ENCODE measurements at regions of chr5 and their contacts with region 1.

Region 1: DNA sequence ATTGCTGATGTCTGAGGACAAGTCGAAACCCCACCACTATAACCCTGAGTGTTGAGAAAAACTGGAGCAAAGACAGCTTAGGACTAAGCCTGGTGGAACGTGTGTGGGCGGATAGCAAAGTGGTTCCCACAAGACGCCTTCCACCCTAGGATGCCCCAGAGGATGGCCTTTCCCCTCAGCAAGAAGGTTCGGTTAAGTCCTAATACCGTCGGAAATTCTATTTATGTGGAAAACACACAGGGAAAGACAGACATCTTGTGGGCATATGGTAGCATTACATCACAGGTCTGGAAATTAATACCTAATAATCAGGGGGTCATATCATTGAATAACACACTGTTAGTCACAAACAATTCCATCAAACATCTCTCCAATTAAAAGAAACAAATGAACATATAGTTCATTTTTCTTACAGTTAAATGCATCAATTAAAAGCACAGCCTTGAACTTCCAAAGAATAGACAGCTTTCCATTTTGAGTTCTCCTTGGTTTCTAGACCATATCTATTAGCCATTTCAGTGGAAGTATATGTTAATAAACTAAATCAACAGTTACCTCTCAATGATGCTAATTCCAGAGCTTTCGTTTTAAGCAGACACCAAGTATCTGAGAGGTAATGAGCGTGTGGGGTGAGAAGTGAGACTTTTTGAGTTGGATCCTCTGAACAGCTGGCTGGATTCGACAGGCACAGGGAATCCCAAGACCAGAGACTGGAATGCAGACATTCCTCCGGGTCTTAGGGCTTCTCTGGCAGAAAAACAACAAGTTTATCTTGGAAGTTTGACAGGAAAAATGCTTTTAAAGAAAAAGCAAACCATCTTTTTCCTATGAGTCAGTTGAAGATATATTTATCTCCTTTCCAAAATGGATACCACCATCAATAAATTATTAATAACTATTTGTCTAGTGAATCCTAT is 2.9 kb upstream of the ICE1 start:
- DNase-seq: peak in 2 of 6 donors; percentile 17 to 28
- ATAC-seq: peak in 1 of 4 donors; percentile 8
- H3K4me3 ChIP-seq: peak overlapping the region in 1 of 4 donors; percentile 5
- H3K27ac ChIP-seq: no peak overlapping the region
- H3K4me1 ChIP-seq: peaks cover 8 to 25% (median 9%) of the 10 kb centered on the region in 3 donors
- H3K27me3 ChIP-seq: no peaks in the 10 kb centered on the region
- CTCF ChIP-seq: peak; percentile 30 to 59 (median 58)

Region 2: GRCh38 chr5:4879693-4880303 is 539.8 kb before region 1 on chr5:
- intact Hi-C with region 1: loop called in 2 of 3 experiments (anchors 5 to 10 kb)
- DNase-seq: peak in 5 of 6 donors; percentile 62 to 90 (median 84)
- ATAC-seq: peak; percentile 66 to 99 (median 95)
- H3K4me3 ChIP-seq: no peak overlapping the region
- H3K27ac ChIP-seq: no peak overlapping the region
- H3K4me1 ChIP-seq: no peaks in the 10 kb centered on the region
- H3K27me3 ChIP-seq: no peaks in the 10 kb centered on the region
- CTCF ChIP-seq: peak; percentile 82 to 95 (median 88)

Region 3: GRCh38 chr5:5141625-5142532 is 277.7 kb before region 1 on chr5:
- intact Hi-C with region 1: loop called in 2 of 3 experiments (anchors 5 kb)
- DNase-seq: peak in 2 of 6 donors; percentile 27 to 55
- ATAC-seq: peak; percentile 53 to 81 (median 70)
- H3K4me3 ChIP-seq: peak overlapping the region in 1 of 4 donors; percentile 37
- H3K27ac ChIP-seq: no peak overlapping the region
- H3K4me1 ChIP-seq: peaks cover 0 to 5% (median 3%) of the 10 kb centered on the region in 3 donors
- H3K27me3 ChIP-seq: peaks cover 0 to 13% (median 5%) of the 10 kb centered on the region in 4 donors
- CTCF ChIP-seq: peak; percentile 70 to 82 (median 78)

Region 4: DNA sequence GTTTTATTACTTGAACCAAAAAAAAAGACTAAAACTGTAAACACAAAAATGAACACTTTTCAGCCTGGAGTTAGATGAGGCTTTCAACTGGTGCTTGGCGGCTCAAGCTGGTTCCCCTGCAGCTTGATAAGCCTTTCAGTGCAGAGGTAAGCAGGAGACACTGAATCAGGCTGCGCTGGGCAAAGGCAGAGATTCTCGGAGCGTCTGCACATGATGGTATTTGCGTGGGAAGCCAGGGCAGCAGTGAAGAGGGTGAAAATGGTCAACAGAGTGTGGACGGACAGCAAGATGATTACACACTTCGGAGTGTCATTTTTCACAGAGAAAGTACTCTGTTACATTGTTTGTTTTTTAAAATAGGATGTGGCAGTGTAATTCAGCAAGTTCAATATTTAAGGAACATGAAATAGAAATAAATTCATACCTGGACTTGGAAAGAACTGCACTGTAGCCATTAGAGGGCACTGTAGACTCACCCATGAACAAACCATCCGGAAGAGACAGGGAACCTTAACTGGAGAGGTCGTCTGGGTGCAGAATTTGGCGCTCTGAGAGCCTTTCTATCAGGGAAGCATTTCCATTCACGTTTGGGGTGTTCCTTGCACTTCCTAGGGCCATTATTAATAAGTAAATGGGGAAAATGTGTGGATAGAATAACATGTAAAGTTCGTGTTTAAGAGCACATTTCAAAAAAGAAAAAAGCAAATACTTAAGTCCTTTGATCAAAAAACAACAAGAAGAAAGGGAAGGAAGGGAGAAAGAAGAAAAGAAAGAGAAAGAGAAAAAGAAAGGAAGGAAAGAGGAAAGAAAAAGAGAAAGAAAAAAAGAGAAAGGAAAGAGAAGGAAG is 72.8 kb after region 1 on chr5:
- intact Hi-C with region 1: no loop called
- DNase-seq: peak in 2 of 6 donors; percentile 11 to 35
- ATAC-seq: peak; percentile 28 to 66 (median 60)
- H3K4me3 ChIP-seq: no peak overlapping the region
- H3K27ac ChIP-seq: no peak overlapping the region
- H3K4me1 ChIP-seq: peaks cover 0 to 5% (median 0%) of the 10 kb centered on the region in 3 donors
- H3K27me3 ChIP-seq: no peaks in the 10 kb centered on the region
- CTCF ChIP-seq: peak in 3 of 4 donors; percentile 29 to 46 (median 36)

Region 5: GRCh38 chr5:5767286-5767928 is 347.9 kb after region 1 on chr5:
- intact Hi-C with region 1: no loop called
- DNase-seq: peak in 3 of 6 donors; percentile 14 to 19 (median 15)
- ATAC-seq: peak in 3 of 4 donors; percentile 55 to 71 (median 70)
- H3K4me3 ChIP-seq: no peak overlapping the region
- H3K27ac ChIP-seq: no peak overlapping the region
- H3K4me1 ChIP-seq: no peaks in the 10 kb centered on the region
- H3K27me3 ChIP-seq: no peaks in the 10 kb centered on the region
- CTCF ChIP-seq: no peak